ENCODE measurements at regions of chr3 and their contacts with region 1.

Region 1: DNA sequence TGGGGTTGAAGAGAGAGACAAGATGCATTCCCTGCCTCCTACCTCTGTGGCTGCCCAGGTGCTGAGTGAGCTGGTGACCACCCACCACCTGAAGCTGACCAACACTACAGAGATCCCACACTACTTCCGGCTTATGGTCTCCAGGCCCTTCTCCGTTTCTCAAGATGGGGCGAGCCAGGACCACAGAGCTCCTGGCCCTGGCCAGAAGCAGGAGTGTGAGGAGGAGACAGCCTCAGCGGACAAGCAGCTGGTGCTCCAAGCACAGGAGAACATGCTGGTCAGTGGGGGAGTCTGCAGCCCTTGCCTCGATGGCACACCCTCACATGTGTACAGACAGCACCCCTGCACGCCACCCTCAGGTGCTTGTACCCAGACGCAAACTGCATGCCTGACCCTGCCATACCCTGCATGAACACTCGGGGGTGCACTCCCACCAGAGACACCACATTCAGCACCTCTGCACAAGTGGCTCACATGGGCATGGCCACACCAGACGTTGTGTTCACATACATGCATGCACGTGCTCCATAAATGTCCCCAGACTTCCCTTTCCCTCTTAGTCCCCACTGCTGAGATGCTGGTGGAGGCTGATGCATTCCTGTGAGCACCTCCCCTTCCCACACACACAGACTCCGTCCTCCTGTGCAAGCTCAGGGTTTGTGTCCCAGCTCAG is 19.0 kb downstream of the ACAA1 start:
- DNase-seq: peak; percentile 43
- H3K4me3 ChIP-seq: no peak overlapping the region
- H3K27ac ChIP-seq: no peak overlapping the region
- H3K4me1 ChIP-seq: no peaks in the 10 kb centered on the region
- H3K27me3 ChIP-seq: no peaks in the 10 kb centered on the region
- CTCF ChIP-seq: peak; percentile 83 to 92

Region 2: GRCh38 chr3:37855363-37855970 is 262.4 kb before region 1 on chr3:
- CTCF ChIA-PET with region 1: no interaction called
- dilution Hi-C with region 1: no loop called
- in situ Hi-C with region 1: no loop called
- intact Hi-C with region 1: loop called (anchors 5 kb)
- DNase-seq: peak; percentile 60
- H3K4me3 ChIP-seq: no peak overlapping the region
- H3K27ac ChIP-seq: no peak overlapping the region
- H3K4me1 ChIP-seq: peaks cover 61% of the 10 kb centered on the region
- H3K27me3 ChIP-seq: no peaks in the 10 kb centered on the region
- CTCF ChIP-seq: peak; percentile 87 to 89

Region 3: GRCh38 chr3:37967260-37967881 is 150.5 kb before region 1 on chr3:
- CTCF ChIA-PET with region 1: no interaction called
- dilution Hi-C with region 1: no loop called
- in situ Hi-C with region 1: no loop called
- intact Hi-C with region 1: no loop called
- DNase-seq: peak; percentile 45
- H3K4me3 ChIP-seq: no peak overlapping the region
- H3K27ac ChIP-seq: no peak overlapping the region
- H3K4me1 ChIP-seq: no peaks in the 10 kb centered on the region
- H3K27me3 ChIP-seq: no peaks in the 10 kb centered on the region
- CTCF ChIP-seq: peak; percentile 78 to 90

Region 4: DNA sequence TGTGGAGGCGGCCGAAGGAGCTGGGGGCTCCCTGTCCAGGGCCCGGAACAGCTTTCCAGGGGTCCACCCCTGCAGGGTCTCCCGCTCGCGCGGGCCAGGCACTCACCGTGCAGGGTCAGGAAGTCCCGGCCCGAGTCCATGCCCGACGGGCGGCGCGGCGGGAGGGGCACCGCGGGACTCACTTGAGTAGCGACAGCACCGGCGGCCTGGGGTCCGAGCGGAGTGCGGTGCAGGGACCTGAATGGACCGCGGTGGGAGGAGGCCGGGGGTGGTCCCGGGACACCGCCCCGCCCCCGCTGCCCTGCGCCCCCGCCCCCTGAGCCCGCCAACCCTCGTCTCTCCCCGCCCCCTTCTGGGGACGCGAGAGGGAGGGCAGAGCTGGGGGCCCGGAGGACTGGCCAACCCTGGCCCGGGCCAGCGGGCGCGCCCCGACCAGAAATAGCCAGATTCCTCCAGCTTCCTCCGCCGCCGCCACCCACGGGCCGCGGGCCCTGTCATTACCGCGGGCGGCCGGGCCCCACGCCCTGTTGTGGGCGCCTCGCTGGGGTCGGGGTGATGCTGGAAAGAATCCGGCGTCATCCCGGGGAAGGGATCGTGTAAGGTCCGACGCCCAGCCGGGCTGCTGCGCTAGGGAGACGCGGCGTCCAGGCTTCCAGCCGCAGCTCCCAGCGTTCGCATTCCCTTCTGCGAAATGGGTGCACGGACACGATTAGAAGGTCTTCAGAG is 88.3 kb before region 1 on chr3 and contains the start of gene PLCD1:
- CTCF ChIA-PET with region 1: interaction called, 7 read pairs
- dilution Hi-C with region 1: no loop called
- in situ Hi-C with region 1: no loop called
- intact Hi-C with region 1: loop called (anchors 2 kb)
- DNase-seq: peak; percentile 48
- H3K4me3 ChIP-seq: peak within 1 kb of the TSS; percentile 43 to 76 (median 72)
- H3K27ac ChIP-seq: peak within 1 kb of the TSS; percentile 94
- H3K4me1 ChIP-seq: peaks cover 54% of the 10 kb centered on the region
- H3K27me3 ChIP-seq: no peaks in the 10 kb centered on the region
- CTCF ChIP-seq: no peak
- total RNA-seq, gene PLCD1: 53.0 to 75.8 TPM

Region 5: GRCh38 chr3:38297947-38298711 is 180.2 kb after region 1 on chr3:
- CTCF ChIA-PET with region 1: interaction called, 5 read pairs
- dilution Hi-C with region 1: no loop called
- in situ Hi-C with region 1: no loop called
- intact Hi-C with region 1: loop called (anchors 1 kb)
- DNase-seq: no peak
- H3K4me3 ChIP-seq: no peak overlapping the region
- H3K27ac ChIP-seq: no peak overlapping the region
- H3K4me1 ChIP-seq: no peaks in the 10 kb centered on the region
- H3K27me3 ChIP-seq: no peaks in the 10 kb centered on the region
- CTCF ChIP-seq: peak; percentile 36 to 52

Region 6: GRCh38 chr3:38479431-38480092 is 361.7 kb after region 1 on chr3:
- CTCF ChIA-PET with region 1: no interaction called
- dilution Hi-C with region 1: no loop called
- in situ Hi-C with region 1: loop called in 1 of 2 experiments (anchors 25 kb)
- intact Hi-C with region 1: loop called (anchors 1 kb)
- DNase-seq: peak; percentile 39
- H3K4me3 ChIP-seq: no peak overlapping the region
- H3K27ac ChIP-seq: no peak overlapping the region
- H3K4me1 ChIP-seq: no peaks in the 10 kb centered on the region
- H3K27me3 ChIP-seq: no peaks in the 10 kb centered on the region
- CTCF ChIP-seq: peak; percentile 89 to 96

Region 7: GRCh38 chr3:38662544-38662943 is 544.7 kb after region 1 on chr3:
- CTCF ChIA-PET with region 1: no interaction called
- dilution Hi-C with region 1: no loop called
- in situ Hi-C with region 1: no loop called
- intact Hi-C with region 1: loop called (anchors 5 kb)
- DNase-seq: peak; percentile 57
- H3K4me3 ChIP-seq: no peak overlapping the region
- H3K27ac ChIP-seq: no peak overlapping the region
- H3K4me1 ChIP-seq: peaks cover 11% of the 10 kb centered on the region
- H3K27me3 ChIP-seq: no peaks in the 10 kb centered on the region
- CTCF ChIP-seq: peak; percentile 72 to 84

Measured in mammary epithelial cell (primary cell).